ENCODE measurements at regions of chr12 and their contacts with region 1.

Region 1: GRCh38 chr12:14629832-14630710 is 62.4 kb upstream of the PLBD1 start:
- DNase-seq: peak; percentile 60
- ATAC-seq: peak; percentile 97 to 99

Region 2: GRCh38 chr12:14417715-14418114 is 212.4 kb before region 1 on chr12:
- intact Hi-C with region 1: no loop called
- DNase-seq: peak; percentile 63
- ATAC-seq: peak; percentile 85

Region 3: DNA sequence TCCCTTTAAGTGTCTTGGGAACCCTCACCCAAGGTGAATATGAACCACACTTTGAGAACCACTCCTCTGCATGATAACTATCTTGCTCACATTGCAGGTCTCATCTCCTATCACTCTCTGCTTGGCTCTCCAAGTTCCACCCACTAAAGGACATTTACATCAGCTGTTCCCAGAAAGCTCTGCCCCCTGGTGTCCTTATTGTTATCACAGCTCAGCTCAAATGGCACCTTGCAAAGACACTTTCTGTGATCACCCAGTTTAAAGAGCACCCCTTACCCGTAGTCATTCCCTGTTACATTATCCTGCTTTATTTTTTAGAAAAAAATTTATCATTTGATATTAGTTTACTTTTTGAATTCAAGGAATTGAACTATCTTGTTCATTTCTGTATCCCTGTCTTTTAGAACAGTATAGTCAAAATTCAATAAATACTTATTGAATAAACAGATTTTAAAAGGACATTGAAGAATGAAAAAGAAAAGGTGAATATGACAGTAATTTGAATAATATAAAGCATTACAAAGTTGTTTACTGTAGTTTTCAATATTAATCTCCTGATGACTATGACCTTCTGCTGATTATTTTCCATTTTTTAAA is 86.9 kb after region 1 on chr12:
- intact Hi-C with region 1: loop called in 1 of 2 experiments (anchors 10 kb)
- DNase-seq: no peak
- ATAC-seq: peak in 1 of 2 donors; percentile 21